Mammary epithelial cell (primary cell): ENCODE measurements at regions of chr10 and their contacts with region 1.

Region 1: DNA sequence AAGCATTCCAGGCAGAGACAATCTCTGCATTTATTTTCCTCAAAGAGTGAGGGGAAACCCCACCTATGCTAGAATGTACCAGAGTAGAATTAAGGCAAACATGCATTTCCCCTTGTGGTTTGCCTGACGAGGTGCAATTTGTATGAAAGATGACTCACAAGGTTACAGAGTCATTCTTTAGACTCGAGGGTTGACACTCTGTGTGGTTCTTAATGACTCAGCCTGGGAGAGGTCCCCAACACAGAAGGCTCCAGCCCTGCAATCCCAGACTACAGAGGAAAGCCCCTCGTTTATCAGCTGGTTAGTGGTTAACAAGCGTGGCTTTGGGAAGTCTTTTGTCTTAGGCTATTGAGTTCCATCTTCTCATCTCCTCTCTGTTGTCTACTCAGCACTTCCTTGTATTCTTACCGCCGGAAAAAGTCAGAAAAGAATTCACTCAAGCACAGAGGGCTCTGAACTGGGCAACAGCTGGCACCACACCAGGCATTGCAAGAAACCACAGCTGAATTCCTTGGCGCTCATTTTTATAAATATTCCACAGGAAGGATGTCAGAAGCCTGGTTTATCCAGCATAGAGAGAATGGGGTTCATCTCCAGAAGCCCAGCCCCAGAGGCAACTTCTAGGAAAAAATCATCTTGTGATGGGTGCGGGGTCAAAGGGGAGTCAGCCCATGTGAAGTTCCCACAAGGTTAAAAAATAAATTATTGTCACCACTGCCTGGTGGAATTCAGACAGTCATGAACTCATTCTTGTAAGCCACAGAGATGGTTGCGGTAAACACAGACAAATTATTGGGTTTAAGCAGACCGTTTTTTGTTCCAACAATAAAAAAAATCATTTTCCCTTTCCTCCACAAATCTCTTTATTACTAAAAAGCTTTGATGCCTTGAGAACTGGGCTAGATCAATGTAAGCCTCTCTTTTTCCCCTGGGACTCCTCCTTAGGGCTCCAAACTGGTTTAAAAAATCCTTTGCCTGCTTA is 24.5 kb upstream of the SVIL start:
- DNase-seq: peak; percentile 100
- H3K4me3 ChIP-seq: no peak overlapping the region
- H3K27ac ChIP-seq: peak overlapping the region; percentile 82
- H3K4me1 ChIP-seq: peaks cover 25% of the 10 kb centered on the region
- H3K27me3 ChIP-seq: no peaks in the 10 kb centered on the region
- CTCF ChIP-seq: peak; percentile 31 to 64

Region 2: GRCh38 chr10:29590915-29591650 is 68.2 kb before region 1 on chr10:
- CTCF ChIA-PET with region 1: no interaction called
- dilution Hi-C with region 1: no loop called
- in situ Hi-C with region 1: no loop called
- intact Hi-C with region 1: loop called (anchors 2 kb)
- DNase-seq: no peak
- H3K4me3 ChIP-seq: no peak overlapping the region
- H3K27ac ChIP-seq: peak overlapping the region; percentile 100
- H3K4me1 ChIP-seq: peaks cover 36% of the 10 kb centered on the region
- H3K27me3 ChIP-seq: no peaks in the 10 kb centered on the region
- CTCF ChIP-seq: no peak

Region 3: GRCh38 chr10:29598851-29599311 is 60.4 kb before region 1 on chr10:
- CTCF ChIA-PET with region 1: no interaction called
- dilution Hi-C with region 1: no loop called
- in situ Hi-C with region 1: no loop called
- intact Hi-C with region 1: loop called (anchors 2 kb)
- DNase-seq: peak; percentile 49
- H3K4me3 ChIP-seq: no peak overlapping the region
- H3K27ac ChIP-seq: peak overlapping the region; percentile 19
- H3K4me1 ChIP-seq: peaks cover 23% of the 10 kb centered on the region
- H3K27me3 ChIP-seq: no peaks in the 10 kb centered on the region
- CTCF ChIP-seq: no peak

Region 4: DNA sequence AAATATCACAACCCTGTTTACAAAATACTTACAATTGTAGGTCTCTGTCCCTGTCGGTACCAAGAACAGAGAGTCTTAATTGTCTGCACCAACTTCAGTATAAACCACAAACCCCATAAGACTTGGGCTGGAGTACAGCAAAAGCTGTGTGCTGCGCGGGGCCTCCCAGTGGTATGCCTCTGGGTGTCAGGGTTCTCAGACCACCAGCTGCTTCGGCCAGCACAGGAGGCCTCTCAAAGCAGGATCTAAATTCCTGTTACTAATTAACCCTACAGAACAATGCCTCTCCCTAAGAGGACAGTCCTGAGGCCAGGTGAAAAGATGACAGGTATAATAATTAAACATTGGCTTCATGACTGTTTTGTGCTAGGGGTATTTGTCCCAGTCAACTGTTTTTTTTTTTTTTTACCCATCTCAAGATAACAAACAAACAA is 23.5 kb before region 1 on chr10:
- CTCF ChIA-PET with region 1: no interaction called
- dilution Hi-C with region 1: no loop called
- in situ Hi-C with region 1: no loop called
- intact Hi-C with region 1: loop called (anchors 1 kb)
- DNase-seq: peak; percentile 36
- H3K4me3 ChIP-seq: no peak overlapping the region
- H3K27ac ChIP-seq: peak overlapping the region; percentile 96
- H3K4me1 ChIP-seq: peaks cover 38% of the 10 kb centered on the region
- H3K27me3 ChIP-seq: no peaks in the 10 kb centered on the region
- CTCF ChIP-seq: no peak

Region 5: GRCh38 chr10:29702273-29703164 is 43.2 kb after region 1 on chr10:
- CTCF ChIA-PET with region 1: no interaction called
- dilution Hi-C with region 1: loop called (anchors 10 kb)
- in situ Hi-C with region 1: no loop called
- intact Hi-C with region 1: no loop called
- DNase-seq: no peak
- H3K4me3 ChIP-seq: no peak overlapping the region
- H3K27ac ChIP-seq: no peak overlapping the region
- H3K4me1 ChIP-seq: no peaks in the 10 kb centered on the region
- H3K27me3 ChIP-seq: no peaks in the 10 kb centered on the region
- CTCF ChIP-seq: no peak

Region 6: GRCh38 chr10:29725133-29725720 is 66.0 kb after region 1 on chr10:
- CTCF ChIA-PET with region 1: no interaction called
- dilution Hi-C with region 1: loop called (anchors 5 kb)
- in situ Hi-C with region 1: no loop called
- intact Hi-C with region 1: no loop called
- DNase-seq: no peak
- H3K4me3 ChIP-seq: no peak overlapping the region
- H3K27ac ChIP-seq: no peak overlapping the region
- H3K4me1 ChIP-seq: no peaks in the 10 kb centered on the region
- H3K27me3 ChIP-seq: no peaks in the 10 kb centered on the region
- CTCF ChIP-seq: no peak

Region 7: DNA sequence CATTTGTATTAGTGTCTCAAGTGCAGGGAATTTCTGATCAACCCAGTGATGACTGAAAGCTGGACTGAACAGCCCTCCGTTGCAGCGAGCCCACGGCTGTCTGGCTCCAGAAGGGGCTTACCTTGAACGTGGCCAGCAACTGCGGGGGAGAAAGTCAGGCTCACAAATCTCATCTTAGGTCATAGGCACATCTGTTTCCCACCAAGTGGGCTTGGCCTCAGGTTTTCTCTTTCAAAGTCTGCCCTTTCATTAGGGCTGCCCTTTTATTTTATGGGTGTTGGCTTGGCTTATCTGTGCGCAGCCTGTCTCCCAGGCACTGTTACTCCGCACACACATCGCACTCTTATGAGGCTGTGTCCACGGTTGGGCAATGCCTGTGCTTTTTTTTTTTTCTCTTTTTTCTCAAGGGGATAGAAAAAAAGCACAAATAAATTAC is 222.1 kb after region 1 on chr10:
- CTCF ChIA-PET with region 1: no interaction called
- dilution Hi-C with region 1: no loop called
- in situ Hi-C with region 1: no loop called
- intact Hi-C with region 1: no loop called
- DNase-seq: no peak
- H3K4me3 ChIP-seq: no peak overlapping the region
- H3K27ac ChIP-seq: no peak overlapping the region
- H3K4me1 ChIP-seq: peaks cover 4% of the 10 kb centered on the region
- H3K27me3 ChIP-seq: no peaks in the 10 kb centered on the region
- CTCF ChIP-seq: no peak